HCT116 (cell line): ENCODE measurements at regions of chr11 and their contacts with region 1.

Region 1: GRCh38 chr11:2151500-2152257 is 9.3 kb downstream of the INS start:
- DNase-seq: peak; percentile 75
- ATAC-seq: peak; percentile 66
- H3K4me3 ChIP-seq: peak overlapping the region; percentile 12 to 20; a peak in 3 of 4 replicates
- H3K27ac ChIP-seq: no peak overlapping the region; the same call in 1 of the 2 replicates
- H3K4me1 ChIP-seq: peaks cover 0 to 4% of the 10 kb centered on the region in 2 experiments; a peak in 1 of 4 replicates
- H3K27me3 ChIP-seq: no peaks in the 10 kb centered on the region; the same call in 1 of the 2 replicates
- CTCF ChIP-seq: peak; percentile 73 to 86 (median 81)
- POLR2A ChIP-seq: no peak
- RAD21 ChIP-seq: peak; percentile 87

Region 2: DNA sequence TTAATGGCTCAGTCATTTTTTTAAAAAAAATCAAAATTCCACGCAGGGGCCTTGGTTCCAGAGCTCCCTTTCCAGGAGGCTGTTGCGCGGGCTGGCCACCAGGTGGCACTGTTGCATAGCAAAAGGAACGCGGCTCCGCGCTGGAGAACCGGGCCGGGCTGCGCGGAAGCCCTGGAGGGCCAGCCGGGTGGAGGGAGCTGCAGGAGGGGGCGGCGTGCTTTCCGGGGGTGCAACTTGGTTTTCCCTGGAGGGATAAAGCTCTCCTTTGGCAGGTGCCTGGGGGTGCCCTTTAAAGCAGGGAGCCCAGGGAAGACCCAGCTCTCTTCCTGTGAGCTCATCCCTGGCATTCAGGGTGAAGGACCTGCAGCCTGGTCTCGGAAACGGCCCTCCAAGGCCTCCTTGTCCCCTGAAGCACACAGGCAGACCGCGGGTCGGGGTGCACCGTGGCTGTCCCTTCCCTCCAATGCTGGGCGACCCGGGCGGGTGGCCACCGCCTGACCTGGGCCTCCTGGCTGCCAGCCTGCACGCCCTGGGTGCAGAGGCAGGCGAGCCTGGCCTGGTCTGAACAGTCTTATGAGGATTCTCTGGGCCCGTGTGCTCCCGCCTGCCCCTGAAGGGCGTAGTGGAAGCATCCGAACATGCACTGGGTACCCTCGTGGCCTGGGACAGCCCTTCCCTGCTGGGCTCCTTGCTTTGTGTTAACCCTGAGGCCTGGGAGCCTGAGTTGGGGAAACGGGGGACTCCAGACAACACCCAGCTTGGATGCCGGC is 498.7 kb before region 1 on chr11:
- CTCF ChIA-PET with region 1: interaction called, 129 read pairs
- POLR2A ChIA-PET with region 1: no interaction called
- RAD21 ChIA-PET with region 1: interaction called, 4 to 22 read pairs
- intact Hi-C with region 1: loop called (anchors 1 kb)
- DNase-seq: no peak
- ATAC-seq: peak; percentile 95
- H3K4me3 ChIP-seq: no peak overlapping the region
- H3K27ac ChIP-seq: no peak overlapping the region
- H3K4me1 ChIP-seq: peaks cover 0 to 7% of the 10 kb centered on the region in 2 experiments; a peak in 3 of 4 replicates
- H3K27me3 ChIP-seq: no peaks in the 10 kb centered on the region
- CTCF ChIP-seq: peak; percentile 92 to 95 (median 93)
- POLR2A ChIP-seq: no peak
- RAD21 ChIP-seq: peak; percentile 97

Region 3: GRCh38 chr11:1837171-1838076 is 314.3 kb before region 1 on chr11:
- CTCF ChIA-PET with region 1: interaction called, 65 read pairs
- POLR2A ChIA-PET with region 1: interaction called, 3 read pairs
- RAD21 ChIA-PET with region 1: interaction called, 3 to 5 read pairs
- intact Hi-C with region 1: loop called (anchors 1 kb)
- DNase-seq: no peak
- ATAC-seq: peak; percentile 60
- H3K4me3 ChIP-seq: no peak overlapping the region
- H3K27ac ChIP-seq: no peak overlapping the region
- H3K4me1 ChIP-seq: peaks cover 26 to 31% of the 10 kb centered on the region in 2 experiments
- H3K27me3 ChIP-seq: no peaks in the 10 kb centered on the region
- CTCF ChIP-seq: peak in 2 of 3 experiments; percentile 80 to 89; a peak in 4 of 6 replicates
- POLR2A ChIP-seq: no peak
- RAD21 ChIP-seq: no peak

Region 4: GRCh38 chr11:1882519-1883238 is 269.0 kb before region 1 on chr11:
- CTCF ChIA-PET with region 1: interaction called, 60 read pairs
- POLR2A ChIA-PET with region 1: interaction called, 5 read pairs
- RAD21 ChIA-PET with region 1: interaction called, 15 to 18 read pairs
- intact Hi-C with region 1: loop called (anchors 1 kb)
- DNase-seq: peak; percentile 43
- ATAC-seq: peak; percentile 99
- H3K4me3 ChIP-seq: no peak overlapping the region
- H3K27ac ChIP-seq: no peak overlapping the region
- H3K4me1 ChIP-seq: no peaks in the 10 kb centered on the region
- H3K27me3 ChIP-seq: peaks cover 4% of the 10 kb centered on the region; the same call in 1 of the 2 replicates
- CTCF ChIP-seq: peak; percentile 88 to 92 (median 91)
- POLR2A ChIP-seq: no peak
- RAD21 ChIP-seq: peak; percentile 95

Region 5: DNA sequence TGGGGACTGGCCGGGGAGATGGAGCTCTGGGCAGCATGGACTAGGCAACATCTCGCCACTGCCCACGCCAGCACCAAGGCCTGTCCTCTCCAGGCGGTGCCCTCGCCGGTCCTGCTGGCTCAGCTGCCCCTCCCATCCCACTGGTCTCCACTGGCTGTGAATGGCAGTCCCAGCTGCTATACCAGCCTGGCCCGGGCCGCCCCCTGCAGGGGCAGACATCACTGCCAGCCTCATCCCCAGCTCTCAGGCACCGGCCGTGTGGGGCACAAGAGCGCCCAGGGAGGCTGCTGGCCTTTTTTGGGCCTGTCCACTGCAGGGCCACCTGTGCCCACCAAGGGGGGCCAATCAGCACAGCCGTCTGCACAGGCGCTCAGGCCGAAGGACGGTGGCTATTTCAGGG is 124.0 kb before region 1 on chr11:
- CTCF ChIA-PET with region 1: interaction called, 52 read pairs
- POLR2A ChIA-PET with region 1: interaction called, 4 read pairs
- RAD21 ChIA-PET with region 1: interaction called in 1 of 2 experiments, 3 read pairs
- intact Hi-C with region 1: no loop called
- DNase-seq: no peak
- ATAC-seq: no peak
- H3K4me3 ChIP-seq: no peak overlapping the region
- H3K27ac ChIP-seq: no peak overlapping the region
- H3K4me1 ChIP-seq: no peaks in the 10 kb centered on the region
- H3K27me3 ChIP-seq: no peaks in the 10 kb centered on the region
- CTCF ChIP-seq: no peak
- POLR2A ChIP-seq: no peak
- RAD21 ChIP-seq: no peak

Region 6: GRCh38 chr11:2137202-2138071 is 14.2 kb before region 1 on chr11:
- CTCF ChIA-PET with region 1: interaction called, 27 read pairs
- POLR2A ChIA-PET with region 1: interaction called, 3 read pairs
- RAD21 ChIA-PET with region 1: interaction called in 1 of 2 experiments, 4 read pairs
- intact Hi-C with region 1: no loop called
- DNase-seq: peak; percentile 36
- ATAC-seq: peak; percentile 83
- H3K4me3 ChIP-seq: peak overlapping the region; percentile 48 to 60
- H3K27ac ChIP-seq: peak overlapping the region; percentile 18; the same call in 1 of the 2 replicates
- H3K4me1 ChIP-seq: peaks cover 0 to 17% of the 10 kb centered on the region in 2 experiments; a peak in 2 of 4 replicates
- H3K27me3 ChIP-seq: no peaks in the 10 kb centered on the region
- CTCF ChIP-seq: no peak
- POLR2A ChIP-seq: no peak
- RAD21 ChIP-seq: no peak